ENCODE measurements at regions of chr17 and their contacts with region 1.

Region 1: GRCh38 chr17:29722411-29723198 is 99.9 kb upstream of the CORO6 start:
- DNase-seq: peak in 4 of 5 donors; percentile 62 to 72 (median 67)
- ATAC-seq: peak; percentile 79 to 94 (median 90)
- H3K4me3 ChIP-seq: peak overlapping the region in 9 of 12 donors; percentile 7 to 51 (median 25)
- H3K27ac ChIP-seq: peak overlapping the region; percentile 75 to 89 (median 82)
- H3K4me1 ChIP-seq: peaks cover 2 to 94% (median 52%) of the 10 kb centered on the region in 12 donors
- H3K27me3 ChIP-seq: no peaks in the 10 kb centered on the region
- CTCF ChIP-seq: no peak
- POLR2A ChIP-seq: no peak

Region 2: GRCh38 chr17:28973425-28973824 is 749.2 kb before region 1 on chr17:
- intact Hi-C with region 1: no loop called
- DNase-seq: peak; percentile 78 to 93 (median 87)
- ATAC-seq: peak; percentile 82 to 89 (median 87)
- H3K4me3 ChIP-seq: no peak overlapping the region
- H3K27ac ChIP-seq: peak overlapping the region in 8 of 12 donors; percentile 16 to 86 (median 78)
- H3K4me1 ChIP-seq: peaks cover 2 to 55% (median 30%) of the 10 kb centered on the region in 12 donors
- H3K27me3 ChIP-seq: no peaks in the 10 kb centered on the region
- CTCF ChIP-seq: peak in 5 of 12 donors; percentile 10 to 31 (median 15)
- POLR2A ChIP-seq: no peak

Region 3: GRCh38 chr17:29549177-29549923 is 173.3 kb before region 1 on chr17:
- intact Hi-C with region 1: no loop called
- DNase-seq: no peak
- ATAC-seq: peak in 2 of 4 donors; percentile 18 to 22
- H3K4me3 ChIP-seq: no peak overlapping the region
- H3K27ac ChIP-seq: no peak overlapping the region
- H3K4me1 ChIP-seq: peaks cover 0 to 15% (median 6%) of the 10 kb centered on the region in 12 donors
- H3K27me3 ChIP-seq: no peaks in the 10 kb centered on the region
- CTCF ChIP-seq: no peak
- POLR2A ChIP-seq: no peak

Region 4: DNA sequence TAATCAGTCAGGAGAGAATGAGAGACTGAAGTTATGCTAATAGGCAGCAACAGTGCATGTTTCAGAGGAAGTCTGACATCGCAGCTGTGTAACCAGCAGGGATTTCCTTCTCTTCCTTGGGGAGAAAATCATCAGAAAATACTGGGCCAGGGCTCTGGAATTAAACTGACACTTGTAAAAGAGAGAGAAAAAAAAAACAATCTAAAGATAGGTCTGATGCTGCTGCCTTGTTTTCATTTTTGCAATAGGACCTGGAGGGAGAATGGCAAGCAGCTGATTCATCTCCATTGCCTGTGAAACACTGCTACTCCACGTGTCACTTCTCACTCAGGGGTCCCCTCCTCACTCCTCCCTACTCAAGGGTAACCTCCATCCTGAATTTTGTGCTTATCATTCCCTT is 82.2 kb before region 1 on chr17:
- intact Hi-C with region 1: loop called in 1 of 10 experiments (anchors 5 kb)
- DNase-seq: no peak
- ATAC-seq: peak in 3 of 4 donors; percentile 6 to 30 (median 15)
- H3K4me3 ChIP-seq: no peak overlapping the region
- H3K27ac ChIP-seq: peak overlapping the region; percentile 60 to 83 (median 76)
- H3K4me1 ChIP-seq: peaks cover 11 to 69% (median 66%) of the 10 kb centered on the region in 12 donors
- H3K27me3 ChIP-seq: no peaks in the 10 kb centered on the region
- CTCF ChIP-seq: no peak
- POLR2A ChIP-seq: no peak

Region 5: GRCh38 chr17:29687596-29687995 is 35.0 kb before region 1 on chr17:
- intact Hi-C with region 1: loop called in 2 of 10 experiments (anchors 5 kb)
- DNase-seq: no peak
- ATAC-seq: peak; percentile 23 to 74 (median 66)
- H3K4me3 ChIP-seq: no peak overlapping the region
- H3K27ac ChIP-seq: peak overlapping the region; percentile 3 to 77 (median 50)
- H3K4me1 ChIP-seq: peaks cover 0 to 69% (median 31%) of the 10 kb centered on the region in 12 donors
- H3K27me3 ChIP-seq: no peaks in the 10 kb centered on the region
- CTCF ChIP-seq: no peak
- POLR2A ChIP-seq: no peak

Measured in heart left ventricle (tissue), 16 donors.